WTC11 (cell line): ENCODE measurements at regions of chr1 and their contacts with region 1.

Region 1: GRCh38 chr1:150995896-150996295 is 10.8 kb downstream of the MINDY1 start:
- DNase-seq: peak; percentile 64
- ATAC-seq: peak; percentile 75
- H3K4me3 Mint-ChIP-seq: no peak overlapping the region
- H3K27ac Mint-ChIP-seq: peak overlapping the region; percentile 70; the same call in 1 of the 2 replicates
- H3K4me1 Mint-ChIP-seq: peaks cover 6% of the 10 kb centered on the region; the same call in 1 of the 2 replicates
- H3K27me3 Mint-ChIP-seq: no peaks in the 10 kb centered on the region
- CTCF ChIP-seq: peak; percentile 92

Region 2: GRCh38 chr1:150970808-150971592 is 24.9 kb before region 1 on chr1:
- CTCF ChIA-PET with region 1: interaction called, 33 read pairs
- POLR2A ChIA-PET with region 1: interaction called, 4 read pairs
- DNase-seq: no peak
- ATAC-seq: no peak
- H3K4me3 Mint-ChIP-seq: peak overlapping the region; percentile 74
- H3K27ac Mint-ChIP-seq: peak overlapping the region; percentile 93
- H3K4me1 Mint-ChIP-seq: peaks cover 44% of the 10 kb centered on the region
- H3K27me3 Mint-ChIP-seq: no peaks in the 10 kb centered on the region
- CTCF ChIP-seq: no peak

Region 3: DNA sequence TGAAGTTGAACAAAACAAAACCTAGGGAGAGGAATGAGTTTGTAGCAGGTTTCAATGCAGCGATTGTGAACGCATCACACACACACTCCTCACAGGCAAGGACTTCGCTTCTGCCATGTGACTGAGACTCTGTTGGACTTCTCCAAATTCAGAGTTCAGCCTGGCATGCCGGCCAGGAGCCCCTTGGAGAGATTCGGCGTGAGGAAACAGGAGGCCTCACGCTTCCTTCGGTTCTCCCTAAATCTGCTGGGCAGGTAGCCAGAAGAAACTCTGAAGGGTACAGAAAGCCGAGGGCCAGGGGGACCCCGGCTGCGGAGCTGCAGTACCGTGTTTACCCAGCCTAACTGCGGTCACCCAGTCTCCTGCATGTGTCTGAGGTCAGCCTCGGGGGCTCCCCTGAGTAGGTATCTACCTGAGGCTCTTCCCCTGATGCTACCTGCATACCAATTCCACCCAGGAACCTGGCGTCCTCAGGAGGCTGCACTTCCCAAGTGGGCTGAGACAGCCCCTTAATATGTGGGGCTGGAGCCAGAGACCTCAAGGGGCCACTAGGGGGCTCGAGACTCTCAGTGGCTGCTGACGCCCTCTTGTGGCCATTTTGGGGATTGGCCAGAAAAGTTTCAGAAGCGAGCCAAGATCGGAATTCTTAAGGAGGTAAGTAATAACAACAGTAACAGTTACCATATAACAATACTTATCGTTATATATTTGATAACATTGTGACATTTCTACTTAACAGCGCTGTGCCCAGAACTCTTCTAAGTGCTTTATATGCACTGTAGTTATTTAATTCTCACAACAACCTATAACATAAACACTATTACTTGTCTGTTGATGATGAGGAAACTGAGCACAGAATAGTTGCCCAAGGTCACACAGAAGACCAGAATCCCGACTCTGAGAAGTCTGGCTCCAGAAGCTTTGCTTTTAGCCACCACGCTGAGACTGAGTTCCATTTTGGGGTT is 16.5 kb before region 1 on chr1:
- CTCF ChIA-PET with region 1: interaction called, 109 read pairs
- POLR2A ChIA-PET with region 1: interaction called, 8 read pairs
- DNase-seq: peak; percentile 93
- ATAC-seq: peak; percentile 29
- H3K4me3 Mint-ChIP-seq: peak overlapping the region; percentile 1; the same call in 1 of the 2 replicates
- H3K27ac Mint-ChIP-seq: peak overlapping the region; percentile 84
- H3K4me1 Mint-ChIP-seq: peaks cover 54% of the 10 kb centered on the region
- H3K27me3 Mint-ChIP-seq: peaks cover 3% of the 10 kb centered on the region; the same call in 1 of the 2 replicates
- CTCF ChIP-seq: peak; percentile 100